GM13976 (cell line): ENCODE measurements at regions of chr6 and their contacts with region 1.

Region 1: DNA sequence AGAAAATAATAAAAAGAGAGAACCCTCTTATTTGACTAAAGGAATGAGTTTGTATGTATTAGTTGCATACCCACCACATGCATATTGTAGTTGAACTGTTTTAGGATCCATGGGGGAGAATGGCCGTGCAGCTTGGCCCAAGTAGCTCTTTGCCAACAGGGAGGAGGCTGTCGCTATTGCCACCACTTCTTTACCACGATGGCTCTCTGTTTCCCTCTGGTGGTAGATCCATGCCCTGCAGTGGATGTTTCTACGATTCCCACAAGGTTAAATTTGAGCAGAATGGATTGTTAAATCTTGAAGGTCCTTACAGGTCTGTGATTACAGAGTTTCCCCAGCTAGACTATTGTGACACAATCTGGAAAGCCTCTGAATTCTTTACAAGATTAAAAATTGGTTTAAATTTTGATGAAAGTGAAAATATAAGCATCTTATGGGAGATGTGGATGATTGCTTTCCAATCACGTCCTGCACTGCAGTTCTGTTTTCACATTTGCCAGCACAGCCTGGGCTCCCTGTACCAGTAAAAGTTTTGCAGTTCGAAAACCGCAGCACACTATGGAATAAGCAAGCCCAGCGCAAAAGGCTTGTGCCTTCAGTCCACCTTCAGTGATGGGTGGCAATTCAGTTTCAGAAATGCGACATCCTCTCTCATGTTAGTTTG is 34.4 kb upstream of the FNDC1 start:
- DNase-seq: peak; percentile 81
- CTCF ChIP-seq: peak; percentile 94

Region 2: DNA sequence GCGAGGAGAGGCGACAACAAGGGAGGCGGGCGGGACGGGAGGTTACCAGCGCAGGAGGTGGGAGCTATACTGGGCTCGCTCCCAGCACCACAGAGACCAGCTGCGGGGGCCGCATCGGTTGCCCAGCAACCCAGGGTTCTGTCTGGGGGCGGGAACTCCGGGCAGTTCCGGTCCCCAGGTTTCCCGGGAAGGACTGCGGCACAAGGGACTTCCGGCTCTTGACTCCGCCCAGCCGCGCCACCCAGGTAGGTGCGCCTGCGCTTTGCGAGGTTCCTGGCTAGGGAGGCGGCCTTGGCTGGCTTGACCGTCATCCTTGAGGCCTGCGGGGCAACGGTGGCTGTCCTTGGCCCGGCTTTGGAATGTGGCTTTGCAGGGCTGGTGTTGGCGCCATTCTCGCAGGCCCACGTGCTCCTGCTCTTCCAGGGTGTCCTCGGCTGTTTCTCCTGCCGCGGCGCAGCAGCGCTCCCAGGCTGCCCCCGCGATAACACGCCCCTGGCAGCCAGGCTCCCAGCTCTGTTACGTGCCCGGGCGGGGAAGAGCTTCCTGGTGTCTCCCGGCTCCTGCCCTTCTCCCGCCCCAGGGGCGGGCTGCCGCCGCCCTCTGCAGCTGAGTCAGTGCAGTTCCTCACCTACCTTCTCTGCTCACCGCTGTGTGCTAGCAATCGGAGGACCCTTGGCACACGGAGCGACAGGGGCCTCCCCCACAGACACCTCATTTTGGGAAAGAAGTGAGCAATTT is 135.0 kb before region 1 on chr6 and contains the start of gene RSPH3:
- in situ Hi-C with region 1: loop called (anchors 10 kb)
- DNase-seq: peak; percentile 99
- CTCF ChIP-seq: no peak

Region 3: GRCh38 chr6:159305804-159306537 is 171.1 kb after region 1 on chr6:
- in situ Hi-C with region 1: no loop called
- DNase-seq: no peak
- CTCF ChIP-seq: no peak

Region 4: GRCh38 chr6:159608961-159609651 is 474.3 kb after region 1 on chr6:
- in situ Hi-C with region 1: no loop called
- DNase-seq: peak; percentile 65
- CTCF ChIP-seq: peak; percentile 78